ENCODE measurements at regions of chr2 and their contacts with region 1.

Region 1: DNA sequence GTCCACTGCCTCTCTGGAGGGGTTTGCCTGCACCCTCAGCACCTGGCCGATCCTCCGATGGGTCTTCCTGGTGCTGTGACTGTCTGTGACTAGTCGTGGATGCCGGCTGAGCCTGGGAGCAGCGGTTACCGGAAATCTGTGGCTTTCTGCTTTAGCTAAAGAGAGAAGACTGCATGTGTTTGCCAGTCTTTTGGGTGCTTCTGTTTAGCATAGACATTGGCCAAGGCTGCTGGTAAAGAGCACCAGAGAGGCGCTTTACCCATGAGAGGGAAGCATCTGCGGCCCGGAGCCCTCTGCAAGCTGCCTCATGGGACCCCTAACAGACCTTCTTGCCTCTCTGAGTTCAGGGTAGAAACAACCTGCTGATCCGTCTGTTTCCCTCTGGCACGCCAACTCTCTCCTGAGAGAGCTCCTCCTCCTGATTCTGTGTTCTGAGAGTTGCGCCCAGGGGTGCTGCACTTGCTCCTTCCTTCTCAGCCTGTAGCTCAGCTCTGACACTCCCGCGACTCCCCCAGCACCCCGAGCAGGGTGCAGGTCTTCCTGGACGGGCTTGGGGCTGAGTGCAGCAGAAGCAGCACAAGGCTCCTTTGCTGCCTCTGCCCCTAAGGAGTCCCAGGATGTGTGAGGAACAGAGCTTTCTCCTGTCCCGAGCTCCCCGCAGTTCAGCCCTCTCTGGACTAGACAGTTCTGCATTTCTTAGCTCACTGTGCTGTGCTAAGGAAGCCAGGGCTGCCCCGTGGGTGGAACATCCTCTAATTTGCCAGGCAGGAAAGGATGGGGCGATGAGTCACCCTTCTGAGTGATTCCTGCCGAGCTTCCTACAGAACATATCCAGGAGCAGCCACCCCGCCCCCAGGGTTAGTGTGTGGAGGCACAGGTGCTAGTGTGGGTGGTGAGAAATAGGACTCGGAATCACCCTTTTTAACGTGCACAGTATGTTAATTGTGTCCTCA is 203.2 kb downstream of the SH3RF3 start:
- DNase-seq: peak; percentile 98
- H3K4me3 Mint-ChIP-seq: peak overlapping the region; percentile 71
- H3K27ac Mint-ChIP-seq: peak overlapping the region; percentile 88
- H3K4me1 Mint-ChIP-seq: peaks cover 54% of the 10 kb centered on the region
- H3K27me3 Mint-ChIP-seq: no peaks in the 10 kb centered on the region
- CTCF ChIP-seq: no peak

Region 2: GRCh38 chr2:108978709-108979111 is 353.5 kb before region 1 on chr2:
- CTCF ChIA-PET with region 1: no interaction called
- POLR2A ChIA-PET with region 1: no interaction called
- intact Hi-C with region 1: no loop called
- DNase-seq: no peak
- H3K4me3 Mint-ChIP-seq: no peak overlapping the region
- H3K27ac Mint-ChIP-seq: no peak overlapping the region
- H3K4me1 Mint-ChIP-seq: peaks cover 12% of the 10 kb centered on the region
- H3K27me3 Mint-ChIP-seq: peaks cover 13% of the 10 kb centered on the region
- CTCF ChIP-seq: no peak

Region 3: DNA sequence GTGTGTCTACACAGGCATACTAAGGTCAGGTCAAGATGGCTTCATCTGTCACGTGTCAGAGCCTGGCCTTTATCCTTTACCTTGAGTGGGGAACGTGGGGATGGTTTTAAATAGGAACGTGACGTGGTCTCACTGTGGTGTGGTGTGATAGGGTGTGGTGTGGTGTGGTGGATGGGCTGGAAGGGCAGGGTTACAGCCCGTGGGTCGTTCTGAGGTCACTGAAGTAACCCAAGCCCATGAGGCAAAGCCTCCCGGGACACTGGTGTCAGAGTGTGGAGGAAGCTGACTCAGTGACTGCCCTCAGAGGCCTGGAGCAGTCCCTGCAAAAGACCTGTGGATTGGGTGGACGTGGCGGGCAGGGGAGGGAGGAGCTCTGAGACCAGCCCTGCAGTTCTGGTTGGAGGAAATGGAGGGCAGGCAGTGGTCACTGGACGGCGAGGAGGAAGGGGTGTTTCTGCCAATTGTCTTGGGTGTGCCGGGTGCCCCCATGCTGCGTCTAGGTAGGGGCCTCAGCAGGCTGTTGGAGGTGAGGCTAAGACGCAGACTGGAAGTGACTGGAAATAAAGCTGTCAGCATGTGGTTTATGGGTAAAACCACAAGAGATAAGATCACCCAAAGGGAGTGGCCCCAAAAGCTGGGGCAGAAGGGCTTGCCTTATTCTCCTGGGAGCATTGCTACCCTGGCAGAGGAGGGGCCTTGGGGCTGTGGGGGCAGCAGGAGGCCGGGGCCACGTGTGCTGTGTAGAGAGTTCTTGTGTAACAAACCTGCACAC is 118.3 kb before region 1 on chr2:
- CTCF ChIA-PET with region 1: no interaction called
- POLR2A ChIA-PET with region 1: no interaction called
- intact Hi-C with region 1: loop called (anchors 5 kb)
- DNase-seq: peak; percentile 97
- H3K4me3 Mint-ChIP-seq: peak overlapping the region; percentile 48
- H3K27ac Mint-ChIP-seq: peak overlapping the region; percentile 90
- H3K4me1 Mint-ChIP-seq: peaks cover 78% of the 10 kb centered on the region
- H3K27me3 Mint-ChIP-seq: no peaks in the 10 kb centered on the region
- CTCF ChIP-seq: no peak

Region 4: DNA sequence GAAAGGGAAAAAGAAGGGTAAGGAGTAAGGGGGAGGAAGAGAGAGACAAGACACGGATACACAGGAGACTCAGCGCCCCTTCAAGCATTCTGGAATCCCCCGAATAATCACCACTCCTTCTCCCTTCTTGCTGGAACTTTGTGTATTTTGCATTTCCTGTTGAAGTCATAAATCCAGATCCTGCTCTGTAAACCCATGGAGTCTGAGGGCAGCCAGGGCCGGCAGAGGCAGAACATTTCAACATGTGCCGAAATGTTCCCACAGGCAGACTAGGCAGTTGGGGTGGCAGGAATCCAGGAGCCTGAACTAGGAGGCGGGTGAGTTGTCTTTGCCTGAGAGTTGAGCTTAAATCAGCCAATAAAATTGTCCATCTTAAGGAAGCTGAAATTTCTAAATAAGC is 10.1 kb before region 1 on chr2:
- CTCF ChIA-PET with region 1: interaction called, 7 read pairs
- POLR2A ChIA-PET with region 1: interaction called, 12 read pairs
- intact Hi-C with region 1: no loop called
- DNase-seq: peak; percentile 97
- H3K4me3 Mint-ChIP-seq: peak overlapping the region; percentile 63
- H3K27ac Mint-ChIP-seq: peak overlapping the region; percentile 71
- H3K4me1 Mint-ChIP-seq: peaks cover 51% of the 10 kb centered on the region
- H3K27me3 Mint-ChIP-seq: no peaks in the 10 kb centered on the region
- CTCF ChIP-seq: no peak

Measured in MCF 10A (cell line).